ENCODE measurements at regions of chr1 and their contacts with region 1.

Region 1: DNA sequence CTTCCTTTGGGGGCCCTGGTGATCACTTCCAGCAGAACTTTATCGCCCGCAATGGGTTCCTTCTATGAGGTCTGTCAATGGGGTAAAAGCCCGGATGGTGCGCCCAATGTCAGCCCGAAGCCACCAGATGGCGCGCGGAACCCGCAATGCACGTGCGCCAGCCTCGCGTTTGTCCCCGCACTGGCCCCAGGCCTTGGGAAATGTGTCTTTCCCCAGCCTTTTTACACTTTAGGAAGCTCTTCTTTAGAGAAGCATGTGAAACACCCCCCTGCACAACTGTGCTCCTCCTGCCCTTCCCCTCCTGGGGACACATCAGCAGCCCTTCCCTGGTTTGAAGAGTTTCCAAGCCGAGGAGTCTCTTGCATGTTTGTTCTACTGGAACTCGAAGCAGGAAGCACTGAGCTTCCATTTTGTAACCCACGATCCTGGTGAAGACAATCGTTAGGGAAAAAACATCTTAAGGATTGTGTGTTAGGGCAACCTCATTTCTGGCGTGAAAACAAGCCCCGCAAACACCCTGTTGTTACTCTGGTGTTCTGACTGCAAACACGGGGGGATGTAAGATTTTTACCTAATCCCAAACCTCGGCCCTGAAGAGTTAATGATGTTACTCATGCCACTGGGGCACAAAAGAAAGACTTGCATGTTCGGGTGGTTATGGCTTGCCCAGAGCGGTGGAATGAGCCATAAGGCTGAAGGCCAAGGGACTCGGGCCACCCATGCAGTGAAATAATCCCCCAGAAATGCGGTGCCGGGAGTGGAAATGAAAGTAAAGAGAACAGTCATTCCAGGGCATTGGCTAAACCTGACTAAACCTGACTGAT is 20.4 kb upstream of the TARBP1 start:
- DNase-seq: peak; percentile 82
- ATAC-seq: peak; percentile 97
- H3K4me3 ChIP-seq: peak overlapping the region; percentile 6 to 35; a peak in 3 of 4 replicates
- H3K27ac ChIP-seq: peak overlapping the region; percentile 98
- H3K4me1 ChIP-seq: peaks cover 41% of the 10 kb centered on the region
- H3K27me3 ChIP-seq: no peaks in the 10 kb centered on the region
- CTCF ChIP-seq: peak; percentile 97

Region 2: GRCh38 chr1:234599617-234600417 is 100.5 kb after region 1 on chr1:
- CTCF ChIA-PET with region 1: interaction called, 5 read pairs
- POLR2A ChIA-PET with region 1: interaction called, 7 read pairs
- in situ Hi-C with region 1: no loop called
- intact Hi-C with region 1: loop called (anchors 2 kb)
- DNase-seq: no peak
- ATAC-seq: peak; percentile 90
- H3K4me3 ChIP-seq: peak overlapping the region; percentile 51 to 57
- H3K27ac ChIP-seq: peak overlapping the region; percentile 99
- H3K4me1 ChIP-seq: peaks cover 47% of the 10 kb centered on the region
- H3K27me3 ChIP-seq: no peaks in the 10 kb centered on the region
- CTCF ChIP-seq: 0 out of 2 replicates have a peak, but pooled peaks have one; percentile 9

Region 3: GRCh38 chr1:234963180-234963903 is 464.0 kb after region 1 on chr1:
- CTCF ChIA-PET with region 1: interaction called, 3 read pairs
- POLR2A ChIA-PET with region 1: interaction called, 3 read pairs
- in situ Hi-C with region 1: no loop called
- intact Hi-C with region 1: loop called (anchors 5 kb)
- DNase-seq: no peak
- ATAC-seq: peak; percentile 54
- H3K4me3 ChIP-seq: peak overlapping the region in 1 of 2 experiments; percentile 29; a peak in 2 of 4 replicates
- H3K27ac ChIP-seq: peak overlapping the region; percentile 100
- H3K4me1 ChIP-seq: peaks cover 71% of the 10 kb centered on the region
- H3K27me3 ChIP-seq: no peaks in the 10 kb centered on the region
- CTCF ChIP-seq: no peak

Region 4: DNA sequence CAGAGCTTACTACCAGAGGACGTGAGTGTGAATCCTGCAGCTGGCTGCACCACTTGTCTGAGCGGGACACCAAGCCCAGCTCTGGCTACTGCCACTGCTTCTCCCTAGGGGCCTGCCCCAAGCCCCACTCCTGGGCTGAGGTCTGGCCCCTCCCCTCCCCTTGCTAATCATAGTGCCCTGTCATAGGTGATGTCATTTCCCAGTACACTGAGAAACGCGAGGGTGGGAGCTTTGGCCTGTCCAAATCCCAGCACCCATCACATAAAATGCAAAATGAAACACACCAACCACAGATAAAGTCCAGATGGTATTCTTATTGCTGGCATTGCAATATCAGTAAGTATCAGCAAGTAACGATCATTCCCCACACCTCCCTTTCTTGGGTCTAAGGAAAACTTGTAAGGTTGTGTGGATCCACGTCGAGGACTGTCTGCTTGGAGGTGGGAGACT is 551.6 kb after region 1 on chr1:
- CTCF ChIA-PET with region 1: interaction called, 11 read pairs
- POLR2A ChIA-PET with region 1: no interaction called
- in situ Hi-C with region 1: no loop called
- intact Hi-C with region 1: no loop called
- DNase-seq: no peak
- ATAC-seq: peak; percentile 18; the same call in 1 of the 2 replicates
- H3K4me3 ChIP-seq: no peak overlapping the region
- H3K27ac ChIP-seq: peak overlapping the region; percentile 71
- H3K4me1 ChIP-seq: peaks cover 29% of the 10 kb centered on the region
- H3K27me3 ChIP-seq: no peaks in the 10 kb centered on the region
- CTCF ChIP-seq: no peak

Region 5: DNA sequence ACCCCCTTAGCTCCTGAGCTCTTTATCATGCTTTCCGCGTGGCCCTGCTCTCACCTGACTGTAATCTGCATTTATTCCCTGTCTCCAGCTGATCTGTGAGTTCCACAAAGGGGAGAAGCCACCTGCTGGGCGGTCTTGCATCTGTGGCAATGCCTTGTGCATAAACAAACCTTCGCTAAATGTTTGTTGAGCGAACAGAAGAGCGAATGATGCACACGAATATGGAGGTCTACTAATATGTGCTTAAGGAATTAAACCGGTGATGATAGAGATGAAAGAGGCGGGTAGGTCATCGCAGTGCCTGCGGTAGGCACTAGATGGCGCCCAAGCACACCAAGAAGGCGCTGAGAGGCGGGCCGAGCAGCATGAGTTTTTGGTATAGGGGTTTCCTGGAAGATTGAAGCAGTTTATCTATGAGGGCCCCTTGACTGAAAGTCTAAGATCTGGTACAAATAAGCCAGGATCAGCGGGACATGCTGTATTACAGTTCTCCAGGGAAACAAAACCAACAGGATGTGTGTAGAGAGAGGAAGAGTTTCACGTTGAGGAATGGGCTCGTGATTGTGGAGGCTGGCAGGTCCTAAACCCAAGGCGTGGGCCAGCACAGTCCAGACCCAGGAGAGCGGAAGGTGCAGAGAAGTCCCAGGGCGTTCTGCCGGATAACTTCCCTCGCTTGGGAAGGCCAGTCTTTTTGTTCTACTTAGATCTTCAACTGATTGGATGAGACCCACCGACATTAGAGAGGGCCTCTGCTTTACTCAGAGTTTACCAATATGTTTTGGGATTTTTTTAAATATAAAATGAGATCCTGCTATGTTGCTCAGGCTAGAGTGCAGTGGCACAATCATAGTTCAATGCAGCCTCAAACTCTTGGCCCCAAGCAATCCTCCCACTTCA is 594.6 kb after region 1 on chr1:
- CTCF ChIA-PET with region 1: interaction called, 9 read pairs
- POLR2A ChIA-PET with region 1: no interaction called
- in situ Hi-C with region 1: no loop called
- intact Hi-C with region 1: loop called (anchors 2 kb)
- DNase-seq: no peak
- ATAC-seq: peak; percentile 67
- H3K4me3 ChIP-seq: no peak overlapping the region
- H3K27ac ChIP-seq: peak overlapping the region; percentile 87
- H3K4me1 ChIP-seq: peaks cover 39% of the 10 kb centered on the region
- H3K27me3 ChIP-seq: no peaks in the 10 kb centered on the region
- CTCF ChIP-seq: peak; percentile 91

Measured in Panc1 (cell line).